HCT116 (cell line): ENCODE measurements at regions of chr1 and their contacts with region 1.

Region 1: DNA sequence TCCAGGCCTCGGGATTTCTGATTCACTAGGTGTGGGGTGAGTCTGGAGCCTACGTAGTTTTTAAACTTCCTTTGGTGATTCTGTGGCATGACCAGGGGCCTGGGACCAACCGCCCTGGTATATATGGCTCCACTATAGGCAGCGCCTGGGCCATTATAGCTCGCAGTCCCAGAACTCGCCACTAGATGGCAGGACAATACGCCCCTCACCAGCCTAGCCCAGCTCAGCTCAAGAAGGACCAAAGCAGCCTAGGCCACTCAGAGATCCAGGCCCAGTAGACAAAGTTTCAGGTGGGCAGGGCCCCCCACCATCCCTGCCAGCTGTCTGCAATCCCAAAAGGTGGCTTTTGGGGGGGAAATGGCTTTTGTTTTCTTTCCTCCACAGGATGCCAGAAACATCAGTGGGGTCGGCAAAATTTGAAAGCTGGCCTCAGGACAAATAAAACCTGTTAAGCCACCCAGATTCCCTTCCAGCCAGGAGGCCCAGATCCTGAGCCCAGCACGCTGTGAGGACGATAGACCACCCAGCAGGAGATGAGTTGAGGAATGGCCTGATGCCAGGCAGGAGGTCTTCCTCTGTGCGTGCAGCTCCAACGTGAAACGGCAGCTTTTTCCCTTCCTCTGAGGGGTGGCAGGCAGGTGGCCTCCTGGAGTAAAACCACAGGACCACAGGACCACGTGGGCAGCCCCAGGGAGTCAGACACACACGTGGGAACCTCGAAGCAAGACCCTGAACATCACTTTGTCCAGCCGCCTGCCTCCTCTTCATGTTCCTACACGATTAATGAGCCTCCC is 24.8 kb upstream of the TMEM51 start:
- DNase-seq: peak; percentile 60
- ATAC-seq: peak; percentile 99
- H3K4me3 ChIP-seq: no peak overlapping the region
- H3K27ac ChIP-seq: no peak overlapping the region; the same call in 1 of the 2 replicates
- H3K4me1 ChIP-seq: peaks cover 0 to 6% of the 10 kb centered on the region in 2 experiments; a peak in 1 of 4 replicates
- H3K27me3 ChIP-seq: no peaks in the 10 kb centered on the region
- CTCF ChIP-seq: peak; percentile 92 to 93 (median 92)
- POLR2A ChIP-seq: no peak
- RAD21 ChIP-seq: peak; percentile 99

Region 2: GRCh38 chr1:14954210-14954609 is 174.5 kb before region 1 on chr1:
- CTCF ChIA-PET with region 1: no interaction called
- POLR2A ChIA-PET with region 1: no interaction called
- RAD21 ChIA-PET with region 1: no interaction called
- intact Hi-C with region 1: no loop called
- DNase-seq: no peak
- ATAC-seq: no peak
- H3K4me3 ChIP-seq: no peak overlapping the region
- H3K27ac ChIP-seq: no peak overlapping the region
- H3K4me1 ChIP-seq: peaks cover 4 to 10% of the 10 kb centered on the region in 2 experiments; a peak in 2 of 4 replicates
- H3K27me3 ChIP-seq: no peaks in the 10 kb centered on the region
- CTCF ChIP-seq: no peak
- POLR2A ChIP-seq: no peak
- RAD21 ChIP-seq: no peak

Region 3: GRCh38 chr1:15141935-15142539 is 13.3 kb after region 1 on chr1:
- CTCF ChIA-PET with region 1: interaction called, 20 read pairs
- POLR2A ChIA-PET with region 1: interaction called, 3 read pairs
- RAD21 ChIA-PET with region 1: interaction called, 3 to 4 read pairs
- intact Hi-C with region 1: no loop called
- DNase-seq: no peak
- ATAC-seq: peak; percentile 52
- H3K4me3 ChIP-seq: peak overlapping the region in 1 of 2 experiments; percentile 24; a peak in 1 of 4 replicates
- H3K27ac ChIP-seq: no peak overlapping the region
- H3K4me1 ChIP-seq: peaks cover 30 to 43% of the 10 kb centered on the region in 2 experiments
- H3K27me3 ChIP-seq: no peaks in the 10 kb centered on the region
- CTCF ChIP-seq: peak in 2 of 3 experiments; percentile 39 to 54; a peak in 4 of 6 replicates
- POLR2A ChIP-seq: no peak
- RAD21 ChIP-seq: no peak

Region 4: DNA sequence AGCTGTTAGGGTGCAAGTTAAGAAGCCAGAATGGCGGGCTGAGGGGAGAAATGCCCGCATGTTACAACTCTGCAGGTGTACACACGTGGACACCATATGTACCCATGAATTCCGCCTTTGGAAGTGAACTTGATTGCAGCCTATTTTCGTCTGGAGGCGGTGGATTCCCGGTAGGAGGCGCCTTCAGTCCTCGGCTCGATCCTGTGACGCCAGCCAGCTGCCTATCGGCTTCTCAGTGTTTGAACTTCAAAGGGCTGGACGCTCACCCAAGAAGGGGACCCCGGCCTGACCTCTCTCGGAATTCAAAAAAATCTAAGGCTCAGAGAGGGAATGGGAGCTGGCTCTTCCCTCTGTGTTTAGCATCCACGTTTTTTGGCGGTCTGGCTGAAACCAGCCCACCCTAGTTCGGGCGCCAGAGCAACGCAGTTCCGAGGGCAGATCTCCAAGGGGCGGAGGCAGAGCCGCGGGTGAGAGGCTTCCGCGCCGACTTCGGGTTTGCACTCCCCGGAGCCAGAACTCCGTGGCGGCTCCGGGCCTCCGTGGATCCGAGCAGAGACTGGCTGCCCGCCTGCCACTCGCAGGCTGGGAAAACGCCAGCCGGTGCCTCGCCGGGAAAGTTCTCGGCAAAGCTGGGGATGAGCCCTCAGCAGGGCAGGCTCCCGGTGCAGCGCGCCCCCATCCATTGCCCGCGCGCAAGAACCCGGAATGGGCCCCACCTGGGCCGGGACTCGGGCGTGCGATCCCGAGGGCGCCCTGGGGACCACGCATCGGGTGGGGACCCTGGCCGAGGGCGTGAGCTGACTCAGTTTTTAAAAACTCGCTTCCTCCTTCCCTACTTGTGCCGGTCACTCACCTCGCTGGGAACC is 23.8 kb after region 1 on chr1:
- CTCF ChIA-PET with region 1: interaction called, 14 read pairs
- POLR2A ChIA-PET with region 1: no interaction called
- RAD21 ChIA-PET with region 1: no interaction called
- intact Hi-C with region 1: no loop called
- DNase-seq: peak; percentile 87
- ATAC-seq: peak; percentile 49
- H3K4me3 ChIP-seq: peak overlapping the region; percentile 66 to 67
- H3K27ac ChIP-seq: peak overlapping the region; percentile 84
- H3K4me1 ChIP-seq: peaks cover 8 to 26% of the 10 kb centered on the region in 2 experiments; a peak in 3 of 4 replicates
- H3K27me3 ChIP-seq: no peaks in the 10 kb centered on the region
- CTCF ChIP-seq: peak; percentile 45 to 84 (median 64)
- POLR2A ChIP-seq: no peak
- RAD21 ChIP-seq: peak; percentile 93

Region 5: DNA sequence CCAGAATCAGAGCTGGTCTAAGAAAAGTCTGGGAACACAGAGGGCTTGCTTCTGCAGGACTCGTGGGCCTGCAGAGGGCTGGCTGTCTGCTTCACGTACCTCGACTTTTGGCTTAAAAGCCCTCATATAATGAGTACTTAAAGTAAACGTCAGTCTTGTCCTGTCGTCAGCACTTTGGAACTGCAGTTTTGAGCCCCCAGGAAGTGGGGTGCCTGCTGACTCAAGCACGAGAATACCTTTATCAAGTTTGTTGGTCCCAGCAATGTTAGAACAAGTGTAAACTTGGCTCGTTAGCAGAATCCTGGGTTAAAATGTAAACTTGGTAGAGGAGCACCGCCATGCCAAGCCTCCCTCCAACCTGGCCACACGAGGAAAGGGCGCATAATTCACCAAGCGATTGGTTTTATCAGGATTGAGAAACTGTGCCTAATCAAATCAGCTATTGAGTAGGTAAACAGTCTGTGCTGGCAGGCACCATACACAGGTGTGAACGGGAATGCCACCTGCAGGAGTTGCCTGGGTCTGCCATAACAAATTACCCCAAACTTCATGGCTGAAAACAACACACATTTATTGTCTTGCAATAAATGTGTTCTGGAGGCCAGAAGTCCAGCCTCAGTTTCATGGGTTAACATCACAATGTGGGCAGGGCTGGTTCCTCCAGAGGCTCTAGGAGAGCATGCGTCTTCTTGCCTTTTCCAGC is 73.3 kb after region 1 on chr1:
- CTCF ChIA-PET with region 1: interaction called, 10 read pairs
- POLR2A ChIA-PET with region 1: no interaction called
- RAD21 ChIA-PET with region 1: no interaction called
- intact Hi-C with region 1: loop called (anchors 5 kb)
- DNase-seq: no peak
- ATAC-seq: no peak
- H3K4me3 ChIP-seq: no peak overlapping the region
- H3K27ac ChIP-seq: no peak overlapping the region
- H3K4me1 ChIP-seq: peaks cover 37 to 84% of the 10 kb centered on the region in 2 experiments
- H3K27me3 ChIP-seq: no peaks in the 10 kb centered on the region
- CTCF ChIP-seq: no peak
- POLR2A ChIP-seq: no peak
- RAD21 ChIP-seq: no peak

Region 6: GRCh38 chr1:15272009-15272788 is 143.5 kb after region 1 on chr1:
- CTCF ChIA-PET with region 1: interaction called, 31 read pairs
- POLR2A ChIA-PET with region 1: no interaction called
- RAD21 ChIA-PET with region 1: interaction called, 6 to 15 read pairs
- intact Hi-C with region 1: loop called (anchors 1 kb)
- DNase-seq: peak; percentile 66
- ATAC-seq: peak; percentile 97
- H3K4me3 ChIP-seq: no peak overlapping the region
- H3K27ac ChIP-seq: no peak overlapping the region
- H3K4me1 ChIP-seq: peaks cover 0 to 13% of the 10 kb centered on the region in 2 experiments; a peak in 2 of 4 replicates
- H3K27me3 ChIP-seq: no peaks in the 10 kb centered on the region
- CTCF ChIP-seq: peak; percentile 81 to 94 (median 84)
- POLR2A ChIP-seq: no peak
- RAD21 ChIP-seq: peak; percentile 99

Region 7: DNA sequence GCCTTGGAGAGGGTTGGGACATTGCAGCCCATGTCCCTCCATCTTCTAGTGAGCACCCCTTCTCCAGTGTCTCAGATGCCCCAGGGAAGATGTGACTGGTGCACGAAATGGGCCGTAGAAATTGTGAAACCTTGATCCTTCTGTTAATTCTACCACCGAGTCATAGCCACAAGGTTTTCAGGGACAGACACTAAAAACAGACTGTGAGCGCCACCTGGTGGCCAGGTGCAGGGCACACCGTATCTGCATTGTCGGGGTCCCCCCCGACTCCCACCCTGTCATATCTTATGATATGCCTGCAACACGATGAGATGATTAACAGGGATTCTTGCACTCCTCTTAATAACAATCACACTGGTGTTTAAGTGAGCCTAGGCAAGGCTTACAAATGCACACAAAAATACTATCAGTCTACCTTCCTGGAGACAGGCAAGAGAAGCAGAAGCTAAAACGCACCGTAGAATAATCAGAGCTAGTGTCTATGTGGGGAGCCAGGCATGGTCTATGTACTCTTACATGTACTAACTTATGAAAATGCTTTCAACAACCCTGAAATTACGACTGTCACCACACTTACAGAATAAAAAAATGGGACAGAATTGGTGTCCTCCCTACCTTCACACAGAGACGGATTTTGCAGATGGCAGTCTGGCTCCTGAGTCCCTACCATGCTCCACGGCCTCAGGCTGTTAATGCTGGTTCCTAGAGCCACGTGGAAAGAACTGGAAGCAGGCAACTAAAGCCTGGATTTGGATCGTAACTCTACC is 176.2 kb after region 1 on chr1:
- CTCF ChIA-PET with region 1: interaction called, 19 read pairs
- POLR2A ChIA-PET with region 1: no interaction called
- RAD21 ChIA-PET with region 1: interaction called, 3 to 7 read pairs
- intact Hi-C with region 1: loop called (anchors 1 kb)
- DNase-seq: peak; percentile 26
- ATAC-seq: peak; percentile 95
- H3K4me3 ChIP-seq: no peak overlapping the region
- H3K27ac ChIP-seq: no peak overlapping the region
- H3K4me1 ChIP-seq: peaks cover 0 to 6% of the 10 kb centered on the region in 2 experiments; a peak in 2 of 4 replicates
- H3K27me3 ChIP-seq: no peaks in the 10 kb centered on the region
- CTCF ChIP-seq: peak; percentile 70 to 100 (median 86)
- POLR2A ChIP-seq: no peak
- RAD21 ChIP-seq: peak; percentile 90

Region 8: GRCh38 chr1:15430787-15431570 is 302.3 kb after region 1 on chr1:
- CTCF ChIA-PET with region 1: interaction called, 11 read pairs
- POLR2A ChIA-PET with region 1: no interaction called
- RAD21 ChIA-PET with region 1: no interaction called
- intact Hi-C with region 1: loop called (anchors 2 kb)
- DNase-seq: no peak
- ATAC-seq: peak; percentile 66
- H3K4me3 ChIP-seq: no peak overlapping the region
- H3K27ac ChIP-seq: no peak overlapping the region
- H3K4me1 ChIP-seq: peaks cover 7 to 48% of the 10 kb centered on the region in 2 experiments; a peak in 3 of 4 replicates
- H3K27me3 ChIP-seq: no peaks in the 10 kb centered on the region
- CTCF ChIP-seq: peak; percentile 82 to 94 (median 92)
- POLR2A ChIP-seq: no peak
- RAD21 ChIP-seq: peak; percentile 95